Activated CD4-positive, alpha-beta memory T cell treated with anti-CD3 and anti-CD28 coated beads, Interleukin-2, amount 10 ng/mL, durations not matched to agents 7 days and 5 days (primary cell): ENCODE measurements at regions of chr18 and their contacts with region 1.

Region 1: DNA sequence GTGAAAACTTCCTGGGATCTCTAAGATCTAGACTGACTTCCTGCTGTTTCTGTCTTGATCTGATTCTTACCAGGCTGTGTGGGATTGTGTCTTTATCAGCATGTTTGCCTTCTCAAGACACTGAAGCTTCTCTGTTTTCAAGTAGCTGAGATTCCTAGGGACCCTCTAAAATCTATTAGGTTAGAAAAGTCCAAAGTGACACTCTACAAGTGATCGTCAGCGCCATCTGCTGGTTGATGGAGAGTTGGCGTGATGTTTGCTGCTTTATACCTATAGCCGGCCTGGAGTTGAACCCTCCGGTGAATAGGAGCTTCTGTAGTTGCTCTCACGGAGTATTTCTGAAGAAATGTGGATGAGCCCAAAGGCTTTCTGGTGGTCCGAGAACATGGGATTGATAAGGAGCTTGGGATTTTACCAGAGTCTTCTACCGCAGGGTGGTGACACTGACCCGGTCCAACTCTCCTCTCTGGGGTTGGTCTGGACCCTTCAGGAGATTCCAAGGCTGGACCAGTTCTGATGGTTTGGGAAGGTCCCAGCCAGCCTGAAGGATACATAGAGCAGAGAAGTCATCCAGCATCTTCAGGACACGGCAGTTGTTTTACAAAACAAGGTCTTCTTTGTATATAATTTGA is 96.0 kb upstream of the TTC39C start:
- DNase-seq: peak; percentile 81
- H3K4me3 Mint-ChIP-seq: no peak overlapping the region
- H3K27ac Mint-ChIP-seq: no peak overlapping the region
- H3K4me1 Mint-ChIP-seq: peaks cover 27% of the 10 kb centered on the region
- H3K27me3 Mint-ChIP-seq: peaks cover 17% of the 10 kb centered on the region

Region 2: DNA sequence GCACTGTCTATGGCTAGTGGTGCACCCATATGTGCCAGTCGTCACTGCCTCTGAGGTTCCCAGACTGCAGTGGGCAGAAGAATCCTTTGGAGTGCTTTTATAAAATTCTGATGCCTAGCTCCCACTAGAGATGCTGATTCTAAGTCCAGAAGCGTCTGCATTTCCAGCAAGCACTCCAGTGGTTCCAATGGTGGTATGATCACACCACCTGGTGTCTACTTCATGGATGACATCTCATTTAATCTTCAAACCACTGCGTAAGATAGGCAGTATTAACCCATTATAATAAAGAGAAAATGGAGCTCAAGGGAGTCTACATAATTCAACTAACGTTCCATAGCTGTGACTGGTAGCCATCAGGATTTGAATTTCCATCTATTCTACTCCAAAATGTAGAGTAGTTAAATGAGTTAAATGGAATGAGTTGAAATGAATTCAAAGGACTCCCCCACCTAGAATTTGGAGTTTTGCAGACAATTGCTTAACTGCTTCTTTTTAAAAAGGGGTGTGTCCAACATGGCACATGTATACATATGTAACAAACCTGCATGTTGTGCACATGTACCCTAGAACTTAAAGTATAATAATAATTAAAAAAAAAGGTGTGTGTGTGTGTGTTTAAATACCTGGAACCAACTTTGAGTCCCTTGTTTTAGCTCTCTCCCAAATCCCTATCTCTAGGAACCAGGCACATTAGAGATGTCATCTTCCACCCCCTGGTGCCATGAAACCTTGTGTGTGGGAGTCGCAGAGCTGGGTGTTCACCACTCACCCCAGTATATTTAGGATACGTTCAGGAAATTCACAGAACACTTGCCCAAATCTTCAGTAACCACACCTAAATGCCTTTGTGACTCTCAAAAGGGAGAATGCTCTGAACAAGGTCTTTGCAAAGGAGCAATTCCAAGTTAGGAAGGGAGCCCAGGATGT is 215.2 kb before region 1 on chr18:
- CTCF ChIA-PET with region 1: interaction called, 11 read pairs
- POLR2A ChIA-PET with region 1: no interaction called
- DNase-seq: peak; percentile 22
- H3K4me3 Mint-ChIP-seq: no peak overlapping the region
- H3K27ac Mint-ChIP-seq: no peak overlapping the region
- H3K4me1 Mint-ChIP-seq: peaks cover 2% of the 10 kb centered on the region
- H3K27me3 Mint-ChIP-seq: peaks cover 47% of the 10 kb centered on the region

Region 3: GRCh38 chr18:23828426-23828825 is 90.1 kb before region 1 on chr18:
- CTCF ChIA-PET with region 1: interaction called, 14 read pairs
- POLR2A ChIA-PET with region 1: interaction called, 5 read pairs
- DNase-seq: peak; percentile 63
- H3K4me3 Mint-ChIP-seq: no peak overlapping the region
- H3K27ac Mint-ChIP-seq: peak overlapping the region; percentile 58
- H3K4me1 Mint-ChIP-seq: peaks cover 34% of the 10 kb centered on the region
- H3K27me3 Mint-ChIP-seq: no peaks in the 10 kb centered on the region

Region 4: GRCh38 chr18:23861805-23862470 is 56.6 kb before region 1 on chr18:
- CTCF ChIA-PET with region 1: interaction called, 10 read pairs
- POLR2A ChIA-PET with region 1: no interaction called
- DNase-seq: no peak
- H3K4me3 Mint-ChIP-seq: no peak overlapping the region
- H3K27ac Mint-ChIP-seq: peak overlapping the region; percentile 68
- H3K4me1 Mint-ChIP-seq: peaks cover 52% of the 10 kb centered on the region
- H3K27me3 Mint-ChIP-seq: no peaks in the 10 kb centered on the region

Region 5: GRCh38 chr18:23938043-23938756 is 19.7 kb after region 1 on chr18:
- CTCF ChIA-PET with region 1: interaction called, 11 read pairs
- POLR2A ChIA-PET with region 1: no interaction called
- DNase-seq: peak; percentile 61
- H3K4me3 Mint-ChIP-seq: no peak overlapping the region
- H3K27ac Mint-ChIP-seq: peak overlapping the region; percentile 61
- H3K4me1 Mint-ChIP-seq: peaks cover 66% of the 10 kb centered on the region
- H3K27me3 Mint-ChIP-seq: peaks cover 33% of the 10 kb centered on the region